Naive thymus-derived CD4-positive, alpha-beta T cell (primary cell): ENCODE measurements at regions of chr2 and their contacts with region 1.

Region 1: GRCh38 chr2:37832590-37833197 is 92.4 kb upstream of the RMDN2 start:
- DNase-seq: peak; percentile 56 to 82 (median 72)
- ATAC-seq: peak; percentile 87
- H3K4me3 ChIP-seq: no peak overlapping the region
- H3K4me3 Mint-ChIP-seq: no peak overlapping the region
- H3K27ac ChIP-seq: no peak overlapping the region
- H3K27ac Mint-ChIP-seq: no peak overlapping the region
- H3K4me1 ChIP-seq: no peaks in the 10 kb centered on the region
- H3K4me1 Mint-ChIP-seq: peaks cover 0 to 15% (median 5%) of the 10 kb centered on the region in 7 donors
- H3K27me3 ChIP-seq: no peaks in the 10 kb centered on the region
- H3K27me3 Mint-ChIP-seq: no peaks in the 10 kb centered on the region

Region 2: DNA sequence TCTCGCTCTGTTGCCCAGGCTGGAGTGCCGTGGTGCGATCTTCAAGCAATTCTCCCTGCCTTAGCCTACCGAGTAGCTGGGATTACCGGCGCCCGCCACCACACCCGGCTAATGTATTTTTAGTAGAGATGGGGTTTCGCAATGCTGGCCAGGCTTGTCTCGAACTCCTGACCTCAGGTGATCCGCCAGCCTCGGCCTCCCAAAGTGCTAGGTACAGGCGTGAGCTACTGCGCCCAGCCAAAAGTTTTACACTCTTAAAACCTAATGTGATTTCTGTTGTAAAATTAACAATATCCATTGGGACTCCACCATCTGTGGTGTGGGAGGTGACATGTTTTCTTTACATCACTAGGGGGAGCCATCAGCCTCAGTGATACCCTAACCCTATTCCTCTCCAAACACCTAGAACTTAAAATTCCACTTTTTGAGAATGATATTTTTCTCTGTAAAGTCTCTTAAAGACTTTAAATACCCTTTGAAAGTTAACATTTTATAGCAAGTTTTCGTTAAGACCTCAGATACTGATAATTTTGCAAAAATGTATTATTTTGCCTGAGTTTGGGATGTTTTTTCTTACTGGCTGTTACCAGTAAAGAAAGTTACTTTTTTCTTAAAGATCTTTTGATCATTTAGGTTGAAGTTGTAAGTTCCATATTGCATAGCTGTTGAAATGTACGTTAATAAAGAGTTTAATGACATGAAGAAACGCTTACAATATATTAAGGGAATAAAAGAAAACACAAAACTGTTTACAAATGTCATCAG is 664.3 kb before region 1 on chr2:
- CTCF ChIA-PET with region 1: no interaction called
- POLR2A ChIA-PET with region 1: no interaction called
- intact Hi-C with region 1: loop called (anchors 1 to 5 kb)
- DNase-seq: peak in 6 of 9 donors; percentile 14 to 52 (median 40)
- ATAC-seq: peak; percentile 80
- H3K4me3 ChIP-seq: no peak overlapping the region
- H3K4me3 Mint-ChIP-seq: no peak overlapping the region
- H3K27ac ChIP-seq: no peak overlapping the region
- H3K27ac Mint-ChIP-seq: peak overlapping the region in 1 of 9 donors; percentile 32
- H3K4me1 ChIP-seq: no peaks in the 10 kb centered on the region
- H3K4me1 Mint-ChIP-seq: no peaks in the 10 kb centered on the region
- H3K27me3 ChIP-seq: no peaks in the 10 kb centered on the region
- H3K27me3 Mint-ChIP-seq: peaks cover 0 to 3% (median 0%) of the 10 kb centered on the region in 5 donors

Region 3: GRCh38 chr2:37287966-37288365 is 544.7 kb before region 1 on chr2:
- CTCF ChIA-PET with region 1: no interaction called
- POLR2A ChIA-PET with region 1: no interaction called
- intact Hi-C with region 1: loop called (anchors 1 to 10 kb)
- DNase-seq: peak in 1 of 9 donors; percentile 13
- ATAC-seq: peak; percentile 37
- H3K4me3 ChIP-seq: no peak overlapping the region
- H3K4me3 Mint-ChIP-seq: no peak overlapping the region
- H3K27ac ChIP-seq: no peak overlapping the region
- H3K27ac Mint-ChIP-seq: peak overlapping the region in 1 of 9 donors; percentile 28
- H3K4me1 ChIP-seq: no peaks in the 10 kb centered on the region
- H3K4me1 Mint-ChIP-seq: peaks cover 0 to 7% (median 0%) of the 10 kb centered on the region in 7 donors
- H3K27me3 ChIP-seq: no peaks in the 10 kb centered on the region
- H3K27me3 Mint-ChIP-seq: no peaks in the 10 kb centered on the region

Region 4: GRCh38 chr2:37397166-37397565 is 435.5 kb before region 1 on chr2:
- CTCF ChIA-PET with region 1: interaction called, 68 read pairs
- POLR2A ChIA-PET with region 1: interaction called, 11 read pairs
- intact Hi-C with region 1: loop called (anchors 1 kb)
- DNase-seq: no peak
- ATAC-seq: no peak
- H3K4me3 ChIP-seq: no peak overlapping the region
- H3K4me3 Mint-ChIP-seq: no peak overlapping the region
- H3K27ac ChIP-seq: no peak overlapping the region
- H3K27ac Mint-ChIP-seq: no peak overlapping the region
- H3K4me1 ChIP-seq: no peaks in the 10 kb centered on the region
- H3K4me1 Mint-ChIP-seq: peaks cover 0 to 6% (median 3%) of the 10 kb centered on the region in 7 donors
- H3K27me3 ChIP-seq: no peaks in the 10 kb centered on the region
- H3K27me3 Mint-ChIP-seq: peaks cover 0 to 35% (median 0%) of the 10 kb centered on the region in 5 donors

Region 5: GRCh38 chr2:37549598-37549997 is 283.1 kb before region 1 on chr2:
- CTCF ChIA-PET with region 1: interaction called, 4 read pairs
- POLR2A ChIA-PET with region 1: no interaction called
- intact Hi-C with region 1: loop called (anchors 1 kb)
- DNase-seq: no peak
- ATAC-seq: no peak
- H3K4me3 ChIP-seq: no peak overlapping the region
- H3K4me3 Mint-ChIP-seq: no peak overlapping the region
- H3K27ac ChIP-seq: no peak overlapping the region
- H3K27ac Mint-ChIP-seq: no peak overlapping the region
- H3K4me1 ChIP-seq: no peaks in the 10 kb centered on the region
- H3K4me1 Mint-ChIP-seq: peaks cover 0 to 9% (median 5%) of the 10 kb centered on the region in 7 donors
- H3K27me3 ChIP-seq: no peaks in the 10 kb centered on the region
- H3K27me3 Mint-ChIP-seq: peaks cover 0 to 8% (median 0%) of the 10 kb centered on the region in 5 donors

Region 6: DNA sequence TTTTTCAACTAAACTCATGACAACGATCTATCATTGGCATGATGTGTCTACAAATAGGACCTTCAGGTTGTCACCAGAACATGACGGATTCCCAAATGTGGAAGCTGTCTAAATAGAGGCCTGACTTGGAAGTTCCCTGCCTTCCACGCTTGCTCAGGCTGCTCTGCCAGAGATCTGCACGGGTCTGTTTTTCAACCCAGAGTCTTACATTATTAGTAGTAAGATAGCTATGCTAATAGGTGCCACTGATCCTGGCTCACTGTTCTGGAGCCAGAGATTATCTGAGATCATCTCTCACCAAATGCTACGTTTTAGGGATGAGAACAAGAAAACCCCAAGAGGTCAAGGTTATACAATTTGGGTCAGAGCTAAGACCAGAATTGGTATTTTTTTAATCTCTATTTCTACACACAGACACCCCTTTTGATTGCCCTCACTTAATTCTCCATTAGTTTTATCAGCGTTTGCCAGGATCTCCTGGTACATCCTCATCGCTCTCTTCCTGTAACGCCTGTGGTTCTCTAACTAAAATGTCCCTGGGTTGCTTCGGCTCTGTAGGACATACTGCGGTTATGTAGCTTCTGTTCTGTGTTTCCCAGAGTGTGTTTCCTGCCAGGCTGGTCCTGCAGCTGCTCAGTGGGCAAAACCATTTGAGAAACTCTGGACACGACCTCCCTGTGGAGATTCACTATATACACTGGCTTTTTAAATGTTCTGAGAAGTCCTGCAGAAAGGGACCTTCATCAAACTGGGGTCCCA is 166.9 kb before region 1 on chr2:
- CTCF ChIA-PET with region 1: no interaction called
- POLR2A ChIA-PET with region 1: no interaction called
- intact Hi-C with region 1: loop called (anchors 5 kb)
- DNase-seq: no peak
- ATAC-seq: no peak
- H3K4me3 ChIP-seq: no peak overlapping the region
- H3K4me3 Mint-ChIP-seq: peak overlapping the region in 2 of 10 donors; percentile 23 to 47
- H3K27ac ChIP-seq: no peak overlapping the region
- H3K27ac Mint-ChIP-seq: peak overlapping the region in 7 of 9 donors; percentile 5 to 86 (median 46)
- H3K4me1 ChIP-seq: peaks cover 22 to 38% of the 10 kb centered on the region in 2 donors
- H3K4me1 Mint-ChIP-seq: peaks cover 37 to 87% (median 77%) of the 10 kb centered on the region in 7 donors
- H3K27me3 ChIP-seq: no peaks in the 10 kb centered on the region
- H3K27me3 Mint-ChIP-seq: no peaks in the 10 kb centered on the region